ENCODE measurements at regions of chr9 and their contacts with region 1.

Region 1: DNA sequence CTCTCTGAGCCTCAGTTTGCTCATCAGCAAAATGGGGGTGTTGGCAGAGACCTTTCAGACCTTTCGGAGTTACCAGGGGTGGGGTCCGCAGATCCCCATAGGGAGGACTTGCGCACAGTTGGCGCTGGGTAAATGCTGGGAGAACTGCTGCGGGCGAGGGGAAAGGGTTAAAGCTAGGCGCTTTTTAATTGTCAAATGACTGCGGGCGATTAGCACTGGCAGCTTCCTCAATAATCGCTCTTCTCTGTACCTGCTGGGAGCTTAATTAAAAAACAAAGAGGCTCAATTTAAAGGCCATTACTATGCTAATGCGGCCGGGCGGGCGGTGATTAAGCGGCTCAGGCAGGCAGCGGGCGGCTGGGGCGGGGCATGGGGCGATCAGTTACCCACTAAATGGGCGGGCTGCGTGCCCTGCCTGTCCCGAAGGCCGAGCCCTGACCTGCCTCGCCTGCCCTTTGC is 63.0 kb downstream of the LMX1B start:
- DNase-seq: no peak
- H3K4me3 ChIP-seq: no peak overlapping the region
- H3K27me3 ChIP-seq: peaks cover 16% of the 10 kb centered on the region
- CTCF ChIP-seq: no peak

Region 2: GRCh38 chr9:126690431-126691350 is 14.0 kb after region 1 on chr9:
- CTCF ChIA-PET with region 1: interaction called, 14 read pairs
- POLR2A ChIA-PET with region 1: no interaction called
- DNase-seq: no peak
- H3K4me3 ChIP-seq: no peak overlapping the region
- H3K27me3 ChIP-seq: peaks cover 3% of the 10 kb centered on the region; the same call in 1 of the 2 replicates
- CTCF ChIP-seq: peak; percentile 63